Endothelial cell of umbilical vein (primary cell): ENCODE measurements at regions of chr5 and their contacts with region 1.

Region 1: DNA sequence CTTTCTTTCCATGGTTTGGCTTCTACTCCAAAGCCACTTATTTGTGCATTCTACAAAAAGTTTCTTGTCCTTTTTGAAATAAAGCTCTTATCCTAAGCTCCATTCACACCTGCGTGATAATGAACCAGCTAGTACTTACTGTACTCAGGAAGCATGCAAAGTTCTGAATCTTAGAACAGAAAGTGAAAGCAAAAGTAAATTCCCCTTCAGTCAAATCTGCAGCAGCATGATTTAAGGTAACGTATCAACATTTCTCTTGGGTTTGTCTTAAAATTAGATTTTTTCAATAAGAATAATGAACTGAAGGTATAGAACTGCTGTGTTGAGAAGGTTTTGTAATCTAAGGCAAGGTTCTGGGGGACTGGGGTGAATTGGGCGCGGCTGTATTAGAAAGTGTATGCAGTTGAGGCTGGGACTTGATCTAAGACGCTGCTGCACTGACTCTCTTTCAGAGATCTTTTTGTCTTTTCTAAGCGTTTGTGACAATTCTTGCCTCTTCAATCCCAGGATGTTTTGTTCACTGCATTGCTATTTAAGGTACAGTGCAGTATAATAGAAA is at the start of gene ERAP2:
- DNase-seq: peak; percentile 85
- H3K4me3 ChIP-seq: peak within 1 kb of the TSS; percentile 51 to 98 (median 80)
- H3K27ac ChIP-seq: peak within 1 kb of the TSS; percentile 76
- H3K4me1 ChIP-seq: peaks cover 34% of the 10 kb centered on the region
- H3K27me3 ChIP-seq: no peaks in the 10 kb centered on the region
- CTCF ChIP-seq: no peak
- POLR2A ChIP-seq: peak; percentile 56
- total RNA-seq, gene ERAP2: 6.1 and 10.0 TPM in 2 replicates

Region 2: GRCh38 chr5:96743065-96743768 is 133.2 kb before region 1 on chr5:
- CTCF ChIA-PET with region 1: no interaction called
- POLR2A ChIA-PET with region 1: no interaction called
- dilution Hi-C with region 1: no loop called
- intact Hi-C with region 1: no loop called
- DNase-seq: peak; percentile 71
- H3K4me3 ChIP-seq: no peak overlapping the region
- H3K27ac ChIP-seq: peak overlapping the region; percentile 82
- H3K4me1 ChIP-seq: peaks cover 23% of the 10 kb centered on the region
- H3K27me3 ChIP-seq: no peaks in the 10 kb centered on the region
- CTCF ChIP-seq: no peak
- POLR2A ChIP-seq: no peak

Region 3: GRCh38 chr5:97183100-97183929 is 306.9 kb after region 1 on chr5 and contains the start of gene RIOK2:
- CTCF ChIA-PET with region 1: no interaction called
- POLR2A ChIA-PET with region 1: no interaction called
- dilution Hi-C with region 1: no loop called
- intact Hi-C with region 1: loop called (anchors 5 kb)
- DNase-seq: peak; percentile 99
- H3K4me3 ChIP-seq: peak within 1 kb of the TSS; percentile 83 to 97 (median 91)
- H3K27ac ChIP-seq: peak within 1 kb of the TSS; percentile 85
- H3K4me1 ChIP-seq: peaks cover 15% of the 10 kb centered on the region
- H3K27me3 ChIP-seq: no peaks in the 10 kb centered on the region
- CTCF ChIP-seq: no peak
- POLR2A ChIP-seq: peak; percentile 81
- total RNA-seq, gene RIOK2: 17.5 and 25.4 TPM in 2 replicates